Activated T-helper 1 cell treated with anti-CD3 and anti-CD28 coated beads, Interleukin-12 subunit alpha, Interleukin-12 subunit beta, Interleukin-2, Interleukin-4 antibody, amounts not matched to agents 30 ng/mL and 10 ng/mL and 1 ng/mL, durations not matched to agents 14 hours and 24 hours and 36 hours (primary cell): ENCODE measurements at regions of chr1 and their contacts with region 1.

Region 1: GRCh38 chr1:52296345-52296744 is 69.7 kb downstream of the CC2D1B start:
- DNase-seq: no peak
- H3K4me3 Mint-ChIP-seq: no peak overlapping the region
- H3K27ac Mint-ChIP-seq: no peak overlapping the region
- H3K4me1 Mint-ChIP-seq: no peaks in the 10 kb centered on the region
- H3K27me3 Mint-ChIP-seq: peaks cover 8% of the 10 kb centered on the region

Region 2: DNA sequence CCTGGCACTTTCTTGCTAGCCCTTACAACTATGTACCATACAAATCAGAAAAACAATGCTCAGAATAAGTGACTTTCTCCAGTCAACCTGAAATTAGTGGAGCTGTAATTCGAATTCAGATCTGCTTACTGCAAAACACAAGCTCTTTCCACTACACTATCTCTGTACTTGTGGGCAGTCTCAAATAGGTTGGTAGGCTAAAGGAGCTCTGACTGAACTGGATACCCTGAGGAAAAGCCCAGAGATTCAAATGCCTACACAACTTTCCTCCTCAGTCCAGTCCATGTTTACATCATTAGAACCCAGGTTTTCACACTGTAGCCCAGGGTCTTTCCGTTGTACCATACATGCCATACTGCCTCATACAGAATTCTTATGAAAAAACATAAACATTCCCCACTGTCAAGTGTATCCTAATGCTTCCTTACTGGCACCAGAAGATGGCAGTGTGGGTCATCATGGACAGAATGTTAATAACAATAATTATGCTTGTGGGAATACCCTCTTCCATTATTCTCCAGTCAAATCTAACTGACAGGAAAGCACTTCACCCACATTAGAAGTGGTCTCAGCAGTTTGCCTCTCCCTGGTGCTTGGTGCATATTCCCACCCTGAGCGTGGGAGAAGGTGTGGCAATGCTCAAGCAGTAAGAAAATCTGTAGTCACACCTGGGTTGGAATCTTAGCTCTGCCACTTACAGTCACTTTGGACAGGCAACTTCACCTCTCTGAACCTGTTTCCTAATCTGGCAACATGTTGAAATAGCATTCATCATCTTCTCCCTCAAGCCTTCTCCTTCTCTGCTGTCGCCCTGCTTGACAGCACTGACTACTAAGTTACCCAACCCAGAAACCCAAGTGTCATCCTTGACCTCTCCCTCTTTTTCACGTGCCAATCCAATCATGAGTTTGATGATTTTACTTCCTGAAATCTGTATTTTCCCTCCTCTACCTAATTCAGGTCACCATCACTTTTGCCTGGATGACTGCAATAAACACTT is 168.9 kb before region 1 on chr1:
- intact Hi-C with region 1: loop called (anchors 1 kb)
- DNase-seq: no peak
- H3K4me3 Mint-ChIP-seq: no peak overlapping the region
- H3K27ac Mint-ChIP-seq: no peak overlapping the region
- H3K4me1 Mint-ChIP-seq: no peaks in the 10 kb centered on the region
- H3K27me3 Mint-ChIP-seq: peaks cover 34% of the 10 kb centered on the region